Left lung (tissue), 14 donors: ENCODE measurements at regions of chr5 and their contacts with region 1.

Region 1: GRCh38 chr5:168219515-168220410 is 71.7 kb upstream of the WWC1 start:
- DNase-seq: peak in 2 of 4 donors; percentile 72 to 84
- ATAC-seq: peak; percentile 95
- H3K4me3 ChIP-seq: peak overlapping the region in 1 of 2 donors; percentile 11
- H3K27ac ChIP-seq: no peak overlapping the region
- H3K4me1 ChIP-seq: no peaks in the 10 kb centered on the region
- H3K27me3 ChIP-seq: no peaks in the 10 kb centered on the region
- CTCF ChIP-seq: peak; percentile 86 to 88

Region 2: GRCh38 chr5:167723254-167723871 is 496.4 kb before region 1 on chr5:
- intact Hi-C with region 1: loop called in 1 of 2 experiments (anchors 10 kb)
- DNase-seq: peak; percentile 62 to 83 (median 75)
- ATAC-seq: peak; percentile 99
- H3K4me3 ChIP-seq: no peak overlapping the region
- H3K27ac ChIP-seq: no peak overlapping the region
- H3K4me1 ChIP-seq: no peaks in the 10 kb centered on the region
- H3K27me3 ChIP-seq: no peaks in the 10 kb centered on the region
- CTCF ChIP-seq: peak; percentile 81 to 85

Region 3: GRCh38 chr5:168057905-168058304 is 161.9 kb before region 1 on chr5:
- intact Hi-C with region 1: no loop called
- DNase-seq: no peak
- ATAC-seq: no peak
- H3K4me3 ChIP-seq: no peak overlapping the region
- H3K27ac ChIP-seq: no peak overlapping the region
- H3K4me1 ChIP-seq: no peaks in the 10 kb centered on the region
- H3K27me3 ChIP-seq: no peaks in the 10 kb centered on the region
- CTCF ChIP-seq: no peak

Region 4: GRCh38 chr5:168114444-168115017 is 105.2 kb before region 1 on chr5:
- intact Hi-C with region 1: loop called in 1 of 2 experiments (anchors 10 kb)
- DNase-seq: peak in 1 of 4 donors; percentile 35
- ATAC-seq: peak; percentile 92
- H3K4me3 ChIP-seq: no peak overlapping the region
- H3K27ac ChIP-seq: no peak overlapping the region
- H3K4me1 ChIP-seq: no peaks in the 10 kb centered on the region
- H3K27me3 ChIP-seq: no peaks in the 10 kb centered on the region
- CTCF ChIP-seq: peak; percentile 50 to 71